ENCODE measurements at regions of chr1 and their contacts with region 1.

Region 1: GRCh38 chr1:214632091-214632490 is 29.1 kb downstream of the CENPF start:
- DNase-seq: no peak
- CTCF ChIP-seq: no peak

Region 2: GRCh38 chr1:214476958-214477870 is 154.9 kb before region 1 on chr1:
- CTCF ChIA-PET with region 1: no interaction called
- POLR2A ChIA-PET with region 1: no interaction called
- DNase-seq: no peak
- CTCF ChIP-seq: no peak

Region 3: GRCh38 chr1:214602764-214603657 is 29.1 kb before region 1 on chr1 and contains the start of gene CENPF:
- CTCF ChIA-PET with region 1: interaction called, 15 read pairs
- POLR2A ChIA-PET with region 1: no interaction called
- DNase-seq: peak; percentile 97
- CTCF ChIP-seq: no peak

Region 4: DNA sequence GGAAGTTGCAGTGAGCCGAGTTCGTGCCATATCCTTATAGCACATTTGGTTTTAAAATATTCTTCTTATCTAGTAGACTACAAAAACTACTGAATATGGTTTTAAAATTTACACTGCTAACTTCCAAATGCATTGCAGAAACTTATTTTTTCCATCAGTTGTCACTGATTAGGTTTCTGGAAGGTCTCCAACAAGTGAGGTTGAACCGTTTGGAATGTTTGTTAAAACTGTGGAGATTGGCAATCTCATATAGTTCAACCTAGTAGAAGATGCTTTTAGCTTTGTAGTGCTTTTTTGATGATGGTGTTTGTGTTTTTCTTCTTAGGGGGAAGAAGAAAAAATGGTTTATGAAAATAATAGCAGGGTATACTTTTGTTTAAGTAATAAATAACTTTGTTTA is 16.2 kb before region 1 on chr1:
- CTCF ChIA-PET with region 1: interaction called, 25 read pairs
- POLR2A ChIA-PET with region 1: no interaction called
- DNase-seq: no peak
- CTCF ChIP-seq: no peak

Measured in GM10248 (cell line).